IMR-90 (cell line): ENCODE measurements at regions of chr11 and their contacts with region 1.

Region 1: DNA sequence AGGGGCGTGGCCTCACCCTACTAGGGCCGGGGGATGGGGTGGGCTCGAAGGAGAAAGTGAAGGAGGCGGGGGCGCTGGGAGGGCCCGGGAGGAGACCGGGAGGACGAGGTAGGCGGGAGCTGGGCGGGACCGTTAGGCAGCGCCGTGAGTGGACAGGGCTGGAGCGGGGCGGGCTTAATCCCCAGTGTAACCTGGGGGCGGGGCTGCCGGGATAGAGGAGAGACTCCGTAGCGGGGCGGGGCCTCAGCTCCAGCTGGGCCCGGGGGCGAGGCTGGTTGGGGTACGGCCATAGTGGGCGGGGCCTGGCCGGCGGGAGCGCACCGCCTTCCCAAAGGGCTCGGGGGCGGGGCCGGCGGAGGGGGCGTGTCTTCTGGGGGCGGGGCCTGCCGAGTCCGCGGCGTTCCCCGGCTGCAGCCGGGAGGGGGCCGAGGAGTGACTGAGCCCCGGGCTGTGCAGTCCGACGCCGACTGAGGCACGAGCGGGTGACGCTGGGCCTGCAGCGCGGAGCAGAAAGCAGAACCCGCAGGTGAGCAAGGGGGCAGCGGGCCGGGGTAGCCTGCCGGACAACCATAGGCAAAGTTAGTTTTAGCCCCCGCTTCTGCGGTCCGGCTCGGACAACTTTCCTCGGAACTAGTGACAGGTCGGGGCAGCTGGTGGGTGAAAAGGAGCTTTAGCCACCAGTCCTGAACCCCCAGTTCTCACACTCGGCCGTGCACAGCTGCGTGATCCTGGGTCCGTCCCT is at the start of gene CD82:
- DNase-seq: peak; percentile 97
- ATAC-seq: peak; percentile 92
- H3K4me3 ChIP-seq: peak within 1 kb of the TSS; percentile 78
- H3K27ac ChIP-seq: peak within 1 kb of the TSS; percentile 93
- H3K4me1 ChIP-seq: peaks cover 45% of the 10 kb centered on the region
- H3K27me3 ChIP-seq: no peaks in the 10 kb centered on the region
- CTCF ChIP-seq: peak; percentile 40
- POLR2A ChIP-seq: peak; percentile 90
- RAD21 ChIP-seq: peak; percentile 47
- total RNA-seq, gene CD82: 18.9 and 32.8 TPM in 2 replicates

Region 2: DNA sequence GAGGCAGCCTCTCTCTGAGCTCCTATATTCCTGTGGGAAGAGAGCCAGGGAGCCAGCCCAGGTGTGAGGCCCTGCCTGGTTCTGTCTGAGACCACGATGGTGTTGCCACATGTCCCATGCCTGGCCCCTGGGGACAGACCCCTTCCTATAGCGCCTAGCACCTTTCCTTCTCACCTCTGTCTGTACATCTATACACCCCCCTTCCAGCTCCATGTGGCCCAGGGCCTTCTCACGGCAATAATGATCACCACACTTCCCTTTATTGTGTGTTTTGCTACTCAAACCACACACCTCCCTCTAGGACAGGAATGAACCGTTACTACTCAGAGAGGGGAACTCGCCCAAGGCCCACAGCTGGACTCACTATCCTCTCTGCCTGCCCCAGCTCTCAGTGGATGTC is 12.9 kb after region 1 on chr11:
- CTCF ChIA-PET with region 1: no interaction called
- POLR2A ChIA-PET with region 1: no interaction called
- dilution Hi-C with region 1: no loop called
- in situ Hi-C with region 1: no loop called
- intact Hi-C with region 1: no loop called
- DNase-seq: no peak
- ATAC-seq: no peak
- H3K4me3 ChIP-seq: no peak overlapping the region
- H3K27ac ChIP-seq: no peak overlapping the region
- H3K4me1 ChIP-seq: peaks cover 27% of the 10 kb centered on the region
- H3K27me3 ChIP-seq: no peaks in the 10 kb centered on the region
- CTCF ChIP-seq: no peak
- POLR2A ChIP-seq: no peak
- RAD21 ChIP-seq: no peak

Region 3: DNA sequence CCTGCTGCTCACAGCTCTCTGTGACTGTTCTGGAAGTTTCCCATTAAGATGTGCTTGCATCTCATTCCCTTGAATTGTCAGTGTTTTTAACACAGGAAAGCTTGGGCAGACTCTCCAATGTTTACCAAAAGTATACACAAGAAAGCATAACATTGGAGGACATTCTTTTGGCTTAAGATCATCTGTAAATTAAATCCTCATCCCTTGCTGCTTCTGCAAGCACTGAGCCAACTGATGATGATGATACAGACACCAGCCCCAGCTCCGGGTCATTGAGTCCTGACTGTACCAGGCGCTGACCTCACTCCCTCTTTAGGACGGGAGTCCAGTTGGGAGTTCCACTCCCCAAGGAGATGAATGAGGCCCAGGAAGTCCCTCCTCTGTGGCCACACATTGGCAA is 23.9 kb after region 1 on chr11:
- CTCF ChIA-PET with region 1: interaction called, 3 read pairs
- POLR2A ChIA-PET with region 1: interaction called, 4 read pairs
- dilution Hi-C with region 1: no loop called
- in situ Hi-C with region 1: no loop called
- intact Hi-C with region 1: loop called (anchors 1 kb)
- DNase-seq: peak; percentile 97
- ATAC-seq: peak; percentile 93
- H3K4me3 ChIP-seq: no peak overlapping the region
- H3K27ac ChIP-seq: peak overlapping the region; percentile 78
- H3K4me1 ChIP-seq: peaks cover 29% of the 10 kb centered on the region
- H3K27me3 ChIP-seq: no peaks in the 10 kb centered on the region
- CTCF ChIP-seq: no peak
- POLR2A ChIP-seq: no peak
- RAD21 ChIP-seq: no peak

Region 4: DNA sequence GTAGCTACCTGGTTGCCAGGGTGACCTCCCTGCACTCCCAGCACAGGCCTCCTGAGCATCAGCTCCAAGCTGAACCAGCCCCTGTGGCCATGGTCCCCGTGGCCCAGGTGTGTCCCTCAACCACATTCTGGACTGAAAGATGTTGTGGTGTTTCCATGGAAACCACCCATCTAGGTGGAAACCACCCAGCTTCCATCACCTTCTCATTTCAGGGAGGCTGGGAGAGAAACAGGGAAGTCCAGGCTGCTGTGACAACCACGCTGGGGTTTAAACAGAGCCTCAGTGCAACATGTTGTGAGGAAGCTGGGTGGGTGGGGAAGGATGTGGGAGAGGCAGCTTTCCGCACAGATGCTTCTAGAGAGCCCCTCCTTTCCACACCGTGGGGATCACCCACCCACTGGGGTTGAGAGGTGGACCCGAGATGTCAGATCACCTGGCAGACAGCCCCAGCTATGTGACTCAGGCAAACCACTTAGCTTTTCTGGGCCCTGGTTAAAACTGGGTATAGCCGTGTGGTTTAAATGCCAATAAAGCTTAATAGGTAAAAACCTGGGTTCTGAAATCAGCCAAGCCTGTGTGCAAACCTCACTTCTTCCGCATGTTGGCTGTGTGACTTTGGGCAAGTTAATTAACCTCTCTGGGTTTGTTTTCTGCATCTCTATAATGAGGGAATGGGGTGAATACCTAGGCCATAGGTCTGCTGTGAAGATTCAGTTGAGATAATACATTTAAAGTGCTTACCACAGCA is 46.5 kb after region 1 on chr11:
- CTCF ChIA-PET with region 1: interaction called, 6 read pairs
- POLR2A ChIA-PET with region 1: no interaction called
- dilution Hi-C with region 1: no loop called
- in situ Hi-C with region 1: loop called (anchors 5 kb)
- intact Hi-C with region 1: loop called (anchors 2 kb)
- DNase-seq: no peak
- ATAC-seq: no peak
- H3K4me3 ChIP-seq: no peak overlapping the region
- H3K27ac ChIP-seq: no peak overlapping the region
- H3K4me1 ChIP-seq: peaks cover 22% of the 10 kb centered on the region
- H3K27me3 ChIP-seq: no peaks in the 10 kb centered on the region
- CTCF ChIP-seq: no peak
- POLR2A ChIP-seq: no peak
- RAD21 ChIP-seq: no peak

Region 5: DNA sequence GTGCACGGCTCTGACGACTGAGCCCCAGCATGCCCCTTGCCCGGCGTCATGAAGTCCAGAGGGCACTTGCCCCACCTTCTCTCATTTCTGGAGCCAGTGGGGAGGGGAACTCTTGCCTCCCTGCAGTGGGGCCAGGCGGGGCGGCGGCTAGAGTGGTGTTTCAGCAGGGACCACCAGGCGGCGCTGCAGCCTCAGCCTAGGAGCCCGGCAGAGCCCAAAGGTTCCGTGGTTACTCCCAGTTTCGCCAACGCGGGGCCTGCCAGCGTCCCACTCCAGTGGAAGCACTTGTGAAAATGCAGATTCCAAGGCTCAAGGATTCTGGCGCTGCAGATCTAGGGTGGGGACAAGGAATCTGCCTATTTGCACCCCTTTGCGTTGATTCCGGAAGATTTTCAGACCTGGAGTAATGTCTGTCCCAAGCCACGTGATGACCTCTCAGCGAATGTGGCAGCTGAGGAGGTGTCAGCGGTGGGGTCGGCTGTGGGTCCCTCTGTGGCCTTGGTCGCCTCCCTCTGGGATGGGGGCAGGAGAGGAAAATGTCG is 55.8 kb after region 1 on chr11:
- CTCF ChIA-PET with region 1: interaction called, 6 read pairs
- POLR2A ChIA-PET with region 1: no interaction called
- dilution Hi-C with region 1: no loop called
- in situ Hi-C with region 1: no loop called
- intact Hi-C with region 1: loop called (anchors 2 kb)
- DNase-seq: peak; percentile 41
- ATAC-seq: peak; percentile 88
- H3K4me3 ChIP-seq: no peak overlapping the region
- H3K27ac ChIP-seq: no peak overlapping the region
- H3K4me1 ChIP-seq: no peaks in the 10 kb centered on the region; the same call in 1 of the 2 replicates
- H3K27me3 ChIP-seq: no peaks in the 10 kb centered on the region
- CTCF ChIP-seq: peak; percentile 90
- POLR2A ChIP-seq: no peak
- RAD21 ChIP-seq: peak; percentile 97

Region 6: DNA sequence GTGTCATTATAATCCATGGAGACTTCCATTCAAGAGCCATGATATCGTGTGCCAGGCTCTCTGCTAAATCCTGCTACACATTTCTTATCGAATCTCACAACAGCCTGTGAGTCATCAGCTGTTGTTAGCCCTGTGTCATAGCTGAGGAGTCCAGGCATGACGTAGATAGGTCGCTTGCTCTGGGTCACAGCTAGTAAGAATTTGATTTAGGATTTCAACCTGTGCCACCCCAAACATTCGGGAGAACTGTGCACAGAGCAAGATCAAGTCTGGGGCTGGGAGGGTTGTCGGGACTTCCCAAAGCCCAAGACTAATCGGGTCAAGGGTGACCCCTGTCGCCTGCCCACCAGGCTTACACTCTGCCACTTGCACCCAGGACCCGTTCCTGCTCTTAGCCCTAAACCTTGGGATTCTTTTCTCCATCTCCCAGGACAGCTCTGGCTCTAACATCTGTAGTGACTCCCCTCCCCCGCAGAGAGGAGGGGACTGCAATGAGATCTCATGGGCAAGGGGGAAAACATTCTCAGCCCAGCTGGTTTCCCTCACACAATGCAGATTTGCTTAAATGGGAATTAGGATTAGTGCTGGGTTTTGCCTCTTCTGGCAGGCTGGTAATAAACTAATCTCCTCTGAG is 195.7 kb after region 1 on chr11:
- CTCF ChIA-PET with region 1: no interaction called
- POLR2A ChIA-PET with region 1: no interaction called
- dilution Hi-C with region 1: no loop called
- in situ Hi-C with region 1: no loop called
- intact Hi-C with region 1: loop called (anchors 10 kb)
- DNase-seq: peak; percentile 96
- ATAC-seq: peak; percentile 94
- H3K4me3 ChIP-seq: no peak overlapping the region
- H3K27ac ChIP-seq: peak overlapping the region; percentile 33; the same call in 1 of the 2 replicates
- H3K4me1 ChIP-seq: peaks cover 20% of the 10 kb centered on the region
- H3K27me3 ChIP-seq: no peaks in the 10 kb centered on the region; the same call in 1 of the 2 replicates
- CTCF ChIP-seq: no peak
- POLR2A ChIP-seq: no peak
- RAD21 ChIP-seq: no peak

Region 7: DNA sequence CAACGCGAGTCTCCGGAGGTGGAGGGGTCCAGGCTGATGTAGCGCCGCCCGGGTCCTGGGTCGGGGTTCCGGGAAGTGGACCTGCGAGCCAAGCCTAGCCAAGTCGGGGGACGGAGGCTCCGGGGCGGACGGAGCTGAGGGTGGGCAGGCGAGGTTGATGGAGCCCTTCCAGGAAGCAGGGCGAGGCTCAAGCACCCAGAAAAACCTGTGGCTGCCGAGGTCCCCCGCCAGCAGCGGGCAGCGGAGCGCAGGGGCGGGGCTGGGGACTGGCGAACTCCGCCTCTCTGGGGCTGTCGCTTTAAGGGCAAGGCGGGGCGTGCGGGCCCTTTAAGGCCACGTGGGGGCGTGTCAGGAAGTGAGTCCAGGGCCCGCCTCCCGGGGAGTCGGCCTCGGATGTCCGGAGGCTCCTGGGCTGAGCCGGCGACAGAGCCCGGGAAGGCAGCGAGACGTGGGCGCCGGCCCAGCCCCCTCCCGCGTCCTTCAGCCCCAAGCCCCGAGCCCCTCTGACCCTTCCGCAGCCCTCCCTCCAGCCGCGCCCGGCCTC is 1239.5 kb after region 1 on chr11 and contains the start of gene SLC35C1:
- CTCF ChIA-PET with region 1: no interaction called
- POLR2A ChIA-PET with region 1: no interaction called
- dilution Hi-C with region 1: no loop called
- in situ Hi-C with region 1: loop called (anchors 25 kb)
- intact Hi-C with region 1: no loop called
- DNase-seq: peak; percentile 90
- ATAC-seq: peak; percentile 93
- H3K4me3 ChIP-seq: peak within 1 kb of the TSS; percentile 87
- H3K27ac ChIP-seq: peak within 1 kb of the TSS; percentile 91
- H3K4me1 ChIP-seq: peaks cover 20% of the 10 kb centered on the region
- H3K27me3 ChIP-seq: no peaks in the 10 kb centered on the region; the same call in 1 of the 2 replicates
- CTCF ChIP-seq: peak; percentile 14; the same call in 1 of the 2 replicates
- POLR2A ChIP-seq: peak; percentile 91
- RAD21 ChIP-seq: no peak
- total RNA-seq, gene SLC35C1: 3.1 and 4.3 TPM in 2 replicates